Activated CD4-positive, alpha-beta memory T cell treated with anti-CD3 and anti-CD28 coated beads for 36 hours (primary cell): ENCODE measurements at regions of chr3 and their contacts with region 1.

Region 1: DNA sequence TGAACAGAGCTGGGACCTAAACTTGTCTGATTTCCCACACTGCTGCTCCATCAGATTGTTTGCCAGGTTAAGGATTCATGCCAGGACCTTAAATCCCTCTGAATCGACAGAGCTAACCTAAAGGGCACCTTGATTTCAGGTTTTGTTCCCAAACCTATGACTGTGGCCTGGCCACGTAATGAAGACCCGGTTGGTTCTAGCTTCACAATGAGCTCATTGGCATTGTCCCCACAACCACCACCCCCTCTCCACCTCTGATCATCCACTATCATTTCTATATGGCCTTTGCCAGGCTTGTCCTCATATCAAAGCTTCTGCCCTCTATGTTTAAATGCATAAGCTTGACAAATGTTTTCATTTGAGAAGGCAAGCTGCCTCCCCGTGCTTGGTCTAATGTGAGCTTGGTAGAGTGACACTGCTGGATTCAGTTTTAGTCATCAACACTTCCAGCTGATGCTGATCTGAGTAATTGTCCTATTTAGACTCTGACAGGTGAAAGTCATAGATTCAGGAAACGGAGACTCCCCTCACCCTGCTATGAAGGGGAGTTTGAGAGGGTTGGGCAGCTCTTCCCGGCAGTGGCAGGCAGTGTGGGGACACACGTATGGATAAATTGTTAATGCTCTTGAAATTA is 407.1 kb upstream of the CFAP20DC start:
- DNase-seq: peak; percentile 63
- H3K4me3 Mint-ChIP-seq: no peak overlapping the region
- H3K27ac Mint-ChIP-seq: peak overlapping the region; percentile 10
- H3K4me1 Mint-ChIP-seq: peaks cover 26% of the 10 kb centered on the region
- H3K27me3 Mint-ChIP-seq: no peaks in the 10 kb centered on the region

Region 2: GRCh38 chr3:59406943-59407342 is 50.0 kb before region 1 on chr3:
- CTCF ChIA-PET with region 1: no interaction called
- POLR2A ChIA-PET with region 1: no interaction called
- intact Hi-C with region 1: no loop called
- DNase-seq: no peak
- H3K4me3 Mint-ChIP-seq: no peak overlapping the region
- H3K27ac Mint-ChIP-seq: no peak overlapping the region
- H3K4me1 Mint-ChIP-seq: peaks cover 19% of the 10 kb centered on the region
- H3K27me3 Mint-ChIP-seq: no peaks in the 10 kb centered on the region

Region 3: DNA sequence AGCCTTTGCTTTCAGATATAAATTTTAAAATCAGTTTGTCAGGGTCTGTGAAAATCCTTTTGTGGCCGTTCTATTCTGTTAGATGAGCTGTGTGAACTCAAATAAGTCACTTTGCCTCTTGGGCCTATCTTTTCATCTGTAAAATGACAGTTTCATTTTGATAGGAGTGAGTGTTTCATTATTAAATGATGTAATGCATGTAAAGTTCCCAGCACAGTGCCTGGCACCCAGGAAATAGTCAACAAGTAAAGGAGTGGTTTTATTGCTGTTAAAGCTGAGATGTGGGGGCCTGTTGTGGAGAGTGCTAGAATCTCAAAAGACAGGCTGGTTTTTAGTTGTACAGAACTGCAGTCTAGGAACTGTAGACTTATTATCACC is 12.7 kb before region 1 on chr3:
- CTCF ChIA-PET with region 1: no interaction called
- POLR2A ChIA-PET with region 1: interaction called, 5 read pairs
- intact Hi-C with region 1: loop called (anchors 1 kb)
- DNase-seq: peak; percentile 48
- H3K4me3 Mint-ChIP-seq: peak overlapping the region; percentile 38
- H3K27ac Mint-ChIP-seq: peak overlapping the region; percentile 49
- H3K4me1 Mint-ChIP-seq: peaks cover 50% of the 10 kb centered on the region
- H3K27me3 Mint-ChIP-seq: peaks cover 1% of the 10 kb centered on the region

Region 4: DNA sequence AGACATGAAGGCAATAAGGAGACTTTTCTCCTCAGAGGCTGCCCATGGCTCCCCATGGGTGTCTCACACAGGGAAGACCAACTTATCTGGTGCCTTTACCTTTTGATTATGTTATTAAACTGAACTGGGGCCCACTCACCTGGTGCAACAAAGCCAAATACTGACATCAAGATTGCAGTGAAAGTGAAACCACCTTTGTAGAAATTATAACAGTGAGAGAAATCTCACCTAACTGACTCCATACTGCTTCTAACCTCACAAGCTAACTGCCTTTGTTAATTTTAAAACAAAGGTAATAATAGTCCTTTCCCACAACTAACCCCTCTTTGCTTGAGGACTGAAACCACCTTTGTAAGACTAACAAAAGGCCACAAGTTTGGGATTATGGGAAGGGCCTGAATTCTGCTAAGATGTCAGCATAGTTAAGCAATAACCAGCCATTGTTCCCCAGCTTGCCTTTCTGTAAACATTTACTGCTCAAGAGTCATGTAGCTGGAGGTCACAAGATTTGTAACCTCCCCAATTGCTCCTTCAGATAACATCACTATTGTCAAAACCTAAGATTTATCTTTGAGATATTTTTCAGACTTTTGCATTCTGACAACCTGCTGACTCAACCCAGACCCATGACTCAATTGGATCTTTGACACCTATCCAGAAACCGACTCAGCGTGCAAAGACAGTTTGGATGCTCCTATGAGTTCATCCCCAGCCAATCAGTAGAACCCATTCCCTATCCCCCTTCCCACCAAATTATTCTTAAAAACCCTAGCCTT is 13.2 kb after region 1 on chr3:
- CTCF ChIA-PET with region 1: no interaction called
- POLR2A ChIA-PET with region 1: interaction called, 4 read pairs
- intact Hi-C with region 1: loop called (anchors 1 kb)
- DNase-seq: peak; percentile 70
- H3K4me3 Mint-ChIP-seq: no peak overlapping the region
- H3K27ac Mint-ChIP-seq: peak overlapping the region; percentile 71
- H3K4me1 Mint-ChIP-seq: peaks cover 22% of the 10 kb centered on the region
- H3K27me3 Mint-ChIP-seq: no peaks in the 10 kb centered on the region

Region 5: DNA sequence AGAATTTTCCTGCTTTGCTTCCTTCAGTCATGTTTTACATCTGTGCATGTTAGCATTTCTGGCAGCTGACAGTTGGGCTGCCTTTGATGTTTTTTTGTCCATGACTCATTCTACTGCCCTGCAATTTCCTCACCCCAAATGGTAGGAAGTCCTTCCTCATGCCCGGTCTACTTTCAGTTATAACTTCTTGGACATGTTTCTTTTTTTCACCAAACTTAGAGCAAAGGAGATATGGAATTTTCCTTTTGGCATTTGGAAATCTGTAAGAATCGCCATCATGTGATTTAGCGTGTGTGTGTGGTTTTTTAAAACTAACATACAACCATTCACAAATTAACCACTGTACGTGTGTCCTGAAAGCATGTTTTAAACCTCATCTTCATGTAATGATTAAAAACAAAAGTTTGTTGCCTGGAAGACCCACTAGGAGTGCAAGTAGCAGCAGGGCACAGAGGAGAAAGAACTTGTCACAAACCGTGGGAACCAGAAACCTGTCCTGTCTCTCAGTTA is 23.6 kb after region 1 on chr3:
- CTCF ChIA-PET with region 1: no interaction called
- POLR2A ChIA-PET with region 1: no interaction called
- intact Hi-C with region 1: no loop called
- DNase-seq: no peak
- H3K4me3 Mint-ChIP-seq: peak overlapping the region; percentile 6
- H3K27ac Mint-ChIP-seq: no peak overlapping the region
- H3K4me1 Mint-ChIP-seq: peaks cover 10% of the 10 kb centered on the region
- H3K27me3 Mint-ChIP-seq: no peaks in the 10 kb centered on the region